ENCODE measurements at regions of chr10 and their contacts with region 1.

Region 1: GRCh38 chr10:19302117-19302516 is 253.5 kb downstream of the MALRD1 start:
- DNase-seq: peak; percentile 91
- ATAC-seq: peak; percentile 98
- H3K4me3 ChIP-seq: no peak overlapping the region
- H3K27ac ChIP-seq: peak overlapping the region; percentile 72
- H3K4me1 ChIP-seq: peaks cover 17% of the 10 kb centered on the region
- H3K27me3 ChIP-seq: no peaks in the 10 kb centered on the region
- CTCF ChIP-seq: no peak

Region 2: DNA sequence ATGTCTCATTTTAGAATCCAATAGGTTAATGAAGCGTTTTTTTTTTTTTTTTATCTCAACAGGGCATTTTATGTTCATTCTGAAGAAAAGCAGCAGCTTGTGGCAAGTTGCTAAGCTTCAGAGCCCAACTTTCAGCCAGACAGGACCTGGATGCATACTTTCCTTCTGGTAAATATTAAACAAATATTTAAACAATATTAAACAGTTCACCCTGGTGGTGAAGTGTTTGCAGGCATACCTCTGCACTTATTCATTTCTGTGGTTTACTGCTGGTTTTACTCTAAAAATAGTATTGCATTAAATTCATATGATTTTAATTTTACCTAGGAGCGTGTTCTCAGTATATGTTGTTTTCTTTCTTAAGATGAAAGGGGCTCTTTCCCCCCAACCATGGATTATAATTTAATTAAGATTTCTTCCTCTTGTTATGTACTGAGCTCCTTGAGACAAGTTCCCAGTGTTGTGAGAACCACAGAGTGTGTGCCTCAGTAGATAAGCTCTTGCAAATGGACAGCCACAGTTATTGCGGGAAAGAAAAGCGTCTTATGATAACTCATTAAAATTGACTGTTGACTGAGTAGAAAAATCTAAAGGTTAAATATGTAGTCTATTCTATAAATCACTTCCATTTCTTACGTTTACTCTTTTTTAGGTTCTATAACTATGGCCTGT is 97.7 kb before region 1 on chr10:
- CTCF ChIA-PET with region 1: no interaction called
- POLR2A ChIA-PET with region 1: no interaction called
- intact Hi-C with region 1: loop called (anchors 10 kb)
- DNase-seq: peak; percentile 62
- ATAC-seq: peak; percentile 91
- H3K4me3 ChIP-seq: no peak overlapping the region; the same call in 1 of the 2 replicates
- H3K27ac ChIP-seq: peak overlapping the region; percentile 67
- H3K4me1 ChIP-seq: peaks cover 17% of the 10 kb centered on the region
- H3K27me3 ChIP-seq: no peaks in the 10 kb centered on the region
- CTCF ChIP-seq: no peak; the same call in 1 of the 2 replicates

Region 3: GRCh38 chr10:19367176-19367575 is 65.1 kb after region 1 on chr10:
- CTCF ChIA-PET with region 1: no interaction called
- POLR2A ChIA-PET with region 1: no interaction called
- intact Hi-C with region 1: no loop called
- DNase-seq: no peak
- ATAC-seq: no peak
- H3K4me3 ChIP-seq: no peak overlapping the region
- H3K27ac ChIP-seq: no peak overlapping the region
- H3K4me1 ChIP-seq: no peaks in the 10 kb centered on the region
- H3K27me3 ChIP-seq: no peaks in the 10 kb centered on the region
- CTCF ChIP-seq: no peak

Region 4: GRCh38 chr10:19480353-19480752 is 178.2 kb after region 1 on chr10:
- CTCF ChIA-PET with region 1: no interaction called
- POLR2A ChIA-PET with region 1: no interaction called
- intact Hi-C with region 1: no loop called
- DNase-seq: no peak
- ATAC-seq: no peak
- H3K4me3 ChIP-seq: no peak overlapping the region
- H3K27ac ChIP-seq: no peak overlapping the region
- H3K4me1 ChIP-seq: no peaks in the 10 kb centered on the region
- H3K27me3 ChIP-seq: no peaks in the 10 kb centered on the region
- CTCF ChIP-seq: no peak

Region 5: GRCh38 chr10:19532411-19532810 is 230.3 kb after region 1 on chr10:
- CTCF ChIA-PET with region 1: no interaction called
- POLR2A ChIA-PET with region 1: no interaction called
- intact Hi-C with region 1: no loop called
- DNase-seq: no peak
- ATAC-seq: no peak
- H3K4me3 ChIP-seq: no peak overlapping the region
- H3K27ac ChIP-seq: no peak overlapping the region
- H3K4me1 ChIP-seq: no peaks in the 10 kb centered on the region
- H3K27me3 ChIP-seq: no peaks in the 10 kb centered on the region
- CTCF ChIP-seq: no peak

Measured in PC-3 (cell line).